Gastrocnemius medialis (tissue), 4 donors: ENCODE measurements at regions of chr2 and their contacts with region 1.

Region 1: DNA sequence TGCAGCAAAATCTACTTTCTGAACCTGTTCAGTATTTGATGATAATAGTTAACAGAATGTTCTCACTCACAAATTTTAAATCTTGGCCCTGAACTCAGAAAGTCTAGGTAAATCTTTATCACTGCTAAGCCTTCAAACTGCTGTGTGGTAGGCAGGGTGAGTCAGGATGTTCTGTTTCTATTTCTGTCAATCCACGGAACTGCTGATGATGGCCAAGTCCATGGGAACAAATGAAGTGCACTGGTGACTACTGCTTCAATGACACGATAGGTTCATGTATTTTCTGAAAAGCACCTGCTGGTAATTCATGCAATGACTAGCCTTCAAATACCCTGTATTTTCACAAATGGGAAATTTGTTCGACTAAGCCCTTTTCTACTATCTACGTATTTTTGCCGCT is 14.2 kb downstream of the NIFK start:
- DNase-seq: peak; percentile 47 to 64
- ATAC-seq: peak; percentile 92 to 96
- H3K4me3 ChIP-seq: no peak overlapping the region
- H3K27ac ChIP-seq: peak overlapping the region; percentile 82 to 90 (median 84)
- H3K4me1 ChIP-seq: peaks cover 12 to 17% of the 10 kb centered on the region in 2 donors
- H3K27me3 ChIP-seq: no peaks in the 10 kb centered on the region
- CTCF ChIP-seq: no peak
- POLR2A ChIP-seq: no peak

Region 2: DNA sequence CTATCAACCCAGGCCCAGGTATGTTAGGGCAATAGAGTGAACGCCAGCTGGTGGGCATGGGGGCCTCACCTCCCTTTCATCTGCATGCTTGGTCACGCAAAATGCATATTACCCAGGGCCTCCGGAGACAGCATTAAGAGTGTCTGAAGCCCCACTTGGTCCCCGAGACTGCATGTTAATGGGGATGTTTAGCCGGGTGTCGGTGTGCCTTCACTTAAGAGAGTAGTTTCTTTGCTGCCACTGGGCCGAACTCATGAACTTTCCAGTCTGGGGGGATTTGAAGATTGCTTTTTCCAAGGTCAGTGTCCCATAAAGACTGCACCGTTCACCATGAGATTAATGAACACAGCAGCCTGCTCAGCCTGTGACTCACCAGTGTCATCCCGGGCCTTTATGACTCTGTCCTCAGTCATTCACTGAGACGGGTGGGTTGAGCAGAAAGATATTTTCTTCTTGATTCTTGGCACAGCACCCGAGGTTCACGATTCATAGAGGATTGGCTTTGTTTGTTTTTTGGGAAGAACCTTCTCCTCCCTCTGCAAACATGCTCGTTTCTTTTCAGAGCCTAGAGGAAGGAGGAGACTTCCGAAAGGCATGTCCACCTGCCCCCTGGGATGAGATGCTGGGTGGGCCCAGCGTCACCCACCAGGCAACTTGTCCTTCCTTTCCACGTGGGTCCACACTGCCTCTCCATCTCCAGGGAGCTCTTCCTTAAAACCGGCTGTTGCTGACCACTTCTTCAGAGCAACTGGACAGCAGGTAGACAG is 787.7 kb before region 1 on chr2:
- in situ Hi-C with region 1: no loop called
- intact Hi-C with region 1: loop called (anchors 10 kb)
- DNase-seq: peak; percentile 45 to 49
- ATAC-seq: peak; percentile 67 to 68
- H3K4me3 ChIP-seq: no peak overlapping the region
- H3K27ac ChIP-seq: peak overlapping the region; percentile 22 to 38 (median 28)
- H3K4me1 ChIP-seq: peaks cover 52 to 65% of the 10 kb centered on the region in 2 donors
- H3K27me3 ChIP-seq: no peaks in the 10 kb centered on the region
- CTCF ChIP-seq: no peak
- POLR2A ChIP-seq: no peak

Region 3: DNA sequence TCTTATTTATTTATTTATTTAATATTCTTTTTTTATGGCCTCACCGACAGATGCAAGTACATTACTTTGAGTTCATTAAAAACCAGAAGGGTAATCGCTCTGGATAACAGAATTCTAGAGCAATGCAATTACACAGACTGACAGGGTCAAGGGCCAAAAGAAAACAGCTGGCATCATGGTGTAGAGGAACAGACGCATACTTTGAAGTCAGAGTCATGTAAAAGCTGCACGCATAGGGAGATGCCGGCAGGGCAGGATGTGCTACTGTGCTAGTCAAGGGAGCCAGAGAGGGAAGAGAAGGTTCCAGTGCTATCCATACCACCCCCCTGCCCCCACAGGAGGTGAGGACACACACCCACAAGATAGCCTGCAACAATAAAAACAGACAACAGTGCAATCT is 322.3 kb before region 1 on chr2:
- in situ Hi-C with region 1: loop called in 2 of 4 experiments (anchors 10 to 25 kb)
- intact Hi-C with region 1: loop called (anchors 1 kb)
- DNase-seq: no peak
- ATAC-seq: no peak
- H3K4me3 ChIP-seq: no peak overlapping the region
- H3K27ac ChIP-seq: no peak overlapping the region
- H3K4me1 ChIP-seq: no peaks in the 10 kb centered on the region
- H3K27me3 ChIP-seq: no peaks in the 10 kb centered on the region
- CTCF ChIP-seq: no peak
- POLR2A ChIP-seq: no peak

Region 4: GRCh38 chr2:121530212-121530705 is 192.2 kb before region 1 on chr2:
- in situ Hi-C with region 1: loop called (anchors 10 to 25 kb)
- intact Hi-C with region 1: loop called (anchors 1 kb)
- DNase-seq: peak; percentile 57 to 67
- ATAC-seq: peak; percentile 68 to 73
- H3K4me3 ChIP-seq: peak overlapping the region; percentile 68 to 80 (median 70)
- H3K27ac ChIP-seq: peak overlapping the region; percentile 85 to 95 (median 92)
- H3K4me1 ChIP-seq: peaks cover 55 to 60% of the 10 kb centered on the region in 2 donors
- H3K27me3 ChIP-seq: no peaks in the 10 kb centered on the region
- CTCF ChIP-seq: no peak
- POLR2A ChIP-seq: no peak

Region 5: GRCh38 chr2:121596221-121597080 is 126.0 kb before region 1 on chr2:
- in situ Hi-C with region 1: no loop called
- intact Hi-C with region 1: loop called (anchors 2 kb)
- DNase-seq: no peak
- ATAC-seq: peak; percentile 63 to 72
- H3K4me3 ChIP-seq: peak overlapping the region; percentile 17 to 54 (median 21)
- H3K27ac ChIP-seq: peak overlapping the region; percentile 77 to 82 (median 80)
- H3K4me1 ChIP-seq: peaks cover 56 to 60% of the 10 kb centered on the region in 2 donors
- H3K27me3 ChIP-seq: no peaks in the 10 kb centered on the region
- CTCF ChIP-seq: peak in 3 of 5 experiments; percentile 21 to 55 (median 52)
- POLR2A ChIP-seq: no peak

Region 6: GRCh38 chr2:121665504-121665903 is 57.0 kb before region 1 on chr2:
- in situ Hi-C with region 1: loop called in 1 of 4 experiments (anchors 10 kb)
- intact Hi-C with region 1: loop called (anchors 5 kb)
- DNase-seq: no peak
- ATAC-seq: peak; percentile 90 to 95
- H3K4me3 ChIP-seq: no peak overlapping the region
- H3K27ac ChIP-seq: peak overlapping the region; percentile 59 to 76 (median 68)
- H3K4me1 ChIP-seq: peaks cover 4 to 30% of the 10 kb centered on the region in 2 donors
- H3K27me3 ChIP-seq: no peaks in the 10 kb centered on the region
- CTCF ChIP-seq: no peak
- POLR2A ChIP-seq: no peak